ENCODE measurements at regions of chr14 and their contacts with region 1.

Region 1: DNA sequence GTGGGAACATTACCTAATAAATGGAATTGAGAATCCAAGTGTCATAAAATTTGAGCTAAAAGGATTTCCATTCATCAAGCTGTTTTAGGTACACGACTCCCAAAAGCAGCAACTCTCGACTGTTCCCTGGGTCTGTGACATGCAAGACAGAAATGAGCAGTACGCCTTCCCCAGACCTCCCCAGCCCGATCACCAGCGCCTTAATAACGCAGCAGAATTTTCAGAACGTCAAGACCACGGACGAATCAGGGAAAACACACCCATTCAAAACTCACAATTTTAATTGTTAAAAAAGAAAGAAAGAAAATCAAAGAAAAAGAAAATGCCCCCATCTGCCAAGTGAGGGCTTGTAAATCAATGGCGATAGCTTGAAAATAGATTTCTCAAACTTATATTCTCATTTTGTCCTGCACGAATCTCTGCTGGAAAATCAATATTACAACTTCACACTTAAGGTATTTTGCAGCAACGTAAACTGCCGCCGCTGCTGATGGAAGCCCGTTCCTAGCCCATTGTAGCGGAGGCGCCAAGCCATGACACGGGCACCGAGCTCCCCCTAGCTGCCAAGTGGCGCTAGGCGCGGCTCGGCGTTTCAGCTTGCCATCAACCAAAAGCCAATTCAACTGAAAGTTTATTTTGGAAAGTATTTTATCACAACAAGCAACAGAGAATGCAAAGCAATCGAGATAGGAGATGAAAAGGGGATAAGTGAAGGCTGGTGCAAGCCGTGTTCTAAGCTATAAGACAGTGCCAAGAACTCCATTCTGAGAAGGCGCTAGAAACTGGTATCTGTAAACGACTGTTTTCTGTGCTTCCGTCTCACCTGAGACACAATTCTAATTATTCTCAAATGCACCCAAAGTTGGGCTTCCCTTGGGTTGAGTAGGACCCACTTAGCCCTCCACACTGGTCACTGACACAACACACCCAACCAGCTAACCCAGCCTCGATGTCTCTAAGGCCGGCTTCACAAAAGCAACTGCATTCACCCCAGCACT is 5.5 kb downstream of the BCL11B start:
- DNase-seq: peak; percentile 80 to 87 (median 87)
- ATAC-seq: peak; percentile 77
- H3K4me3 ChIP-seq: no peak overlapping the region
- H3K4me1 ChIP-seq: peaks cover 6% of the 10 kb centered on the region
- CTCF ChIP-seq: peak; percentile 94

Region 2: GRCh38 chr14:98138666-98139065 is 1127.8 kb before region 1 on chr14:
- intact Hi-C with region 1: loop called in 1 of 2 experiments (anchors 10 kb)
- DNase-seq: peak in 1 of 3 donors; percentile 65
- ATAC-seq: peak; percentile 73
- H3K4me3 ChIP-seq: no peak overlapping the region
- H3K4me1 ChIP-seq: no peaks in the 10 kb centered on the region
- CTCF ChIP-seq: peak; percentile 50

Region 3: GRCh38 chr14:99064226-99064954 is 202.1 kb before region 1 on chr14:
- intact Hi-C with region 1: no loop called
- DNase-seq: no peak
- ATAC-seq: no peak
- H3K4me3 ChIP-seq: no peak overlapping the region
- H3K4me1 ChIP-seq: no peaks in the 10 kb centered on the region
- CTCF ChIP-seq: no peak

Measured in mucosa of descending colon (tissue), 3 donors.